Vagina (tissue), 2 donors: ENCODE measurements at regions of chr3 and their contacts with region 1.

Region 1: DNA sequence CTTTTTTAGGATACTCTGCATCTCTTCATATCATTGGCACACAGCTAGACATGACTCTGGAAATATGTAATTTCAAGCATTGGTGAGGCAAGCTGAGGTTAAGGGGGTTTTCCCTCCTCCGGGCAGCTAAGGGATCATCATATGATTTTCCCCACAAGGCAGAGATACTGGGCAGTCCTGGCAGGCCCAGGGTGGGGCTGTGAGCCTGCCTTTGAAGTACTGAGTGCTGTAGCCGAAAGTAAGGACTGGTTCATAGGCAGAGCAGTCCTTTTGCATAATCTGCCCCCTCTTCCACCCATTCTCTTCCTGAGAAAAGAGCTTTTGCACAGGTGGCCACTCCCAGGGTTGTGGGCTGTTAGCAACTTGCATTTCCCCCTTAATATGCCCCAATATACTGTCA is 168.8 kb upstream of the MANF start:
- DNase-seq: no peak
- H3K4me3 ChIP-seq: no peak overlapping the region
- H3K27ac ChIP-seq: no peak overlapping the region
- H3K4me1 ChIP-seq: no peaks in the 10 kb centered on the region
- H3K27me3 ChIP-seq: no peaks in the 10 kb centered on the region
- CTCF ChIP-seq: no peak
- POLR2A ChIP-seq: no peak

Region 2: DNA sequence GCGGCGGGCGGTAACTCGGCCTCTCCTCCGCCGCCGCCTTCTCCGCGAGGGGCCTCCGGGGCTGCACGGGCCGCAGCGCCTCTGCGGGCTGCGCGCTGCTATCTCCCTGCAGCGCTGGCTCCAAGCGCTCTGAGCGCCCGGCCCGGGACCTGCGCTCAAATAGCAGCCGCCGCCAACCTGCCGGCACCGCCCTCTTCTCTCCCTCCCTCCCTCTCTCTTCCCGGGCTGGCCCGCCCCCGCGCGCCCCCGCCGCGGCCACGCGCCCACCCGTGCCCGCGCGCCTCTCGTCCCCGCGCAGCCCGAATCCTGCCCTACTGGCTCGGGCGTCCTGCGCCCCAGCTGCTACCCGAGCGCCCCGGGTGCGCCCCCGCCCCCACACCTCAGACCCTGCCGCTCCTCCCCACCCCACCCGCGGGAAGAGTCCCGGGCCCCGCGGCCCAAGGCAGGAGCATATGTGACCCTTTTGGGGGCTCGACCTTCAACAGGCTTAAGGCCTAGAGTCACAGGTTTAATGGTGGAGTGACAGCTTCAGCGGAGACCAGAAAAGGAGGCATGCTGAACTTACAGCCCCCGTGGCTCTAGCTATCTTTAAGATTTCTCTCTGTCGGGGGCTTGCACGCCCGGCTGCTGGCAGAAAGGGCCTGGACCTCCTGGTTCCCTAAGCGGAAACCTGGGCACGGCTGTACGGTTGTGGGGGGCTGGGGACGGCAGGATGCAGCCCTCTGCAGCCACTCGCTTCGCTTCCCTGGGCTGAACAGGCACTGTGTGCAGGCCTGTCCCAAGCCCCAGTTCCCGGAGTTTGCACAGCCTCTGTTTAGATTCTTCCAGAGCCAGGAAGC is 712.6 kb before region 1 on chr3 and contains the start of gene CACNA2D2:
- intact Hi-C with region 1: no loop called
- DNase-seq: no peak
- H3K4me3 ChIP-seq: peak within 1 kb of the TSS; percentile 48 to 85
- H3K27ac ChIP-seq: peak within 1 kb of the TSS; percentile 72
- H3K4me1 ChIP-seq: peaks cover 12% of the 10 kb centered on the region
- H3K27me3 ChIP-seq: no peaks in the 10 kb centered on the region
- CTCF ChIP-seq: no peak
- POLR2A ChIP-seq: peak in 1 of 2 donors; percentile 21
- total RNA-seq, gene CACNA2D2: 2.5 TPM

Region 3: GRCh38 chr3:51257870-51258269 is 41.6 kb after region 1 on chr3:
- intact Hi-C with region 1: loop called (anchors 1 kb)
- DNase-seq: no peak
- H3K4me3 ChIP-seq: no peak overlapping the region
- H3K27ac ChIP-seq: no peak overlapping the region
- H3K4me1 ChIP-seq: no peaks in the 10 kb centered on the region
- H3K27me3 ChIP-seq: no peaks in the 10 kb centered on the region
- CTCF ChIP-seq: no peak
- POLR2A ChIP-seq: no peak